Mammary epithelial cell (primary cell): ENCODE measurements at regions of chr3 and their contacts with region 1.

Region 1: DNA sequence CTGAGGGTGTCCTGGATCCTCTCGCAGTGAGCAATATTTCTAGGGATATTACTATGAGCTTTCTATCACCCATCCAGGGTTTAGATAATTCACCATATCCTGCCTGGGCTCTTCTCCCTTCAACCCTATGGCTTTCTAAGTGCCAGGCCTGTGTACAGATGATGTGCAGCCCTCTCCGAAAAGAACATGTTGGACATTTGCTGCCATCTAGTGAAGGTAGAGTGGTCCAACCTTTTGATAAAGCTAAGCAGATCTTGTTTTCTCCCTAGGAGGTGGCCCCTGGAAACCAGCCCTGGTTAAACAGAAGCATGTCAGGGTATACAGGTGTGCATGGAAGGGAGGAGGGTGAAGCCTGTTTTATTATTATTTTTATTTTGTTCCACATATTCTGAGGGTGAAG is 27.9 kb upstream of the SCN10A start:
- DNase-seq: peak; percentile 45
- H3K4me3 ChIP-seq: no peak overlapping the region
- H3K27ac ChIP-seq: no peak overlapping the region
- H3K4me1 ChIP-seq: no peaks in the 10 kb centered on the region
- H3K27me3 ChIP-seq: no peaks in the 10 kb centered on the region
- CTCF ChIP-seq: peak; percentile 15 to 60

Region 2: DNA sequence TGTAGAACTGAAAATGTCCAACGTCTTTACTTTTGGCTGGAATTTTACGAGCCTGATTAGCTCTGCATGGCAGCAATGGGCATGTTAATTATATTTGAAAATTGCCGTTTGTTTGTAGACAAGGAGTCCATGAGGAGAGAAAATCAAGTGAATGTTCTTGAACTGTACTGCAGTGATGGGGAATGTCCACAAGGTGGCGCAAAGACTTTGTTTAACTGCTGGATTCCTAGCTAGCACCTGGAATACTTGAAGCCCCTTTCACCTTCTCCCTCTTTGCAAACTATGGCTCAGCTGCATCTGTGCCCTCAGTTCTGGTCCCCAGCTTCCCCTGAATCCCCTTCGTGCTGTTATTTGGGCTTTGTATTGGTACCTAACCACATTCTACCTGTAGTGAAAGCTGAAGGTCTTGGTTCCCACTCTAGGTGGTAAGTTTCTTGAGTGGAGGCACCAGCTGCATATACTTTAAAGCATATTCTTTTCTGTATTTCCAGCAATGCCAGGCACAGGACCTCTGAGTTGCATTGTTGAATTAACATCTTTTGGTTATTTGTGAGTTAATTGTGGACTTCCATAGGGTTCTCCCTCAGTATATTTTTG is 322.4 kb before region 1 on chr3:
- CTCF ChIA-PET with region 1: no interaction called
- dilution Hi-C with region 1: no loop called
- in situ Hi-C with region 1: loop called in 1 of 2 experiments (anchors 25 kb)
- intact Hi-C with region 1: loop called (anchors 5 kb)
- DNase-seq: peak; percentile 54
- H3K4me3 ChIP-seq: no peak overlapping the region
- H3K27ac ChIP-seq: no peak overlapping the region
- H3K4me1 ChIP-seq: no peaks in the 10 kb centered on the region
- H3K27me3 ChIP-seq: no peaks in the 10 kb centered on the region
- CTCF ChIP-seq: peak; percentile 81 to 90

Region 3: DNA sequence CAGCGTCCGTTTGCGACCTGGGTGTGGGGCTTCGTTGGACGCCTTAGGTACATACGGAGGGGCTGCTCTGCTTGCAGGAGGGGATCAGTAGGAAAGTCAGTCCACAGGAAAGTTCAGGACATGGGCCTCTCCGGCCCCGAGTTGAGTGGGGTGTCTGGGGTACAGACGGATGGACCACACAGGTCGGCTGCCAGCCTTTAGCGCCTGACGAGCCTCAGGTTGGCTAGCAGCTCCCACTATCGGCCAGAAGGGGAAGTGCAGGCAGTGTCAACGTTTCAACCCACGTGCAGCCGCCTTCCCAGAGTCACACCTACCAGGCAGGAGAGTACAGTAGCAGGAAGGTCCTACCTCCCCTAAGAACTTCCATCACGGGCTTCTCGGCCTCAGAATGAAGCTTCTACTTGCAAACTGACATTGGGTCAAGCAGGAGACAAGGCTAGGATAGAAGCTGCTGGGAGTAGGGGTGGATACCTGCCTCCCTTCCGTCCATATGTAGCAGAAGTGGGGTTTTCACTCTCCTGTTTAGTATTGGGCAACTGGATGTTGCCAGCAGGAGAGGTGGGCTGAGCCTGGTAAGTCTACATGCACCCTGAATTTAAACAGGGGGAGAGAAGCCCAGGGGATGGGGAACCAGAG is 192.6 kb before region 1 on chr3:
- CTCF ChIA-PET with region 1: no interaction called
- dilution Hi-C with region 1: no loop called
- in situ Hi-C with region 1: no loop called
- intact Hi-C with region 1: loop called (anchors 2 kb)
- DNase-seq: peak; percentile 45
- H3K4me3 ChIP-seq: no peak overlapping the region
- H3K27ac ChIP-seq: no peak overlapping the region
- H3K4me1 ChIP-seq: peaks cover 6% of the 10 kb centered on the region
- H3K27me3 ChIP-seq: peaks cover 9% of the 10 kb centered on the region
- CTCF ChIP-seq: peak; percentile 98 to 99

Region 4: GRCh38 chr3:38805765-38806386 is 38.0 kb before region 1 on chr3:
- CTCF ChIA-PET with region 1: no interaction called
- dilution Hi-C with region 1: no loop called
- in situ Hi-C with region 1: no loop called
- intact Hi-C with region 1: no loop called
- DNase-seq: peak; percentile 67
- H3K4me3 ChIP-seq: no peak overlapping the region
- H3K27ac ChIP-seq: no peak overlapping the region
- H3K4me1 ChIP-seq: no peaks in the 10 kb centered on the region
- H3K27me3 ChIP-seq: peaks cover 3% of the 10 kb centered on the region
- CTCF ChIP-seq: no peak

Region 5: GRCh38 chr3:39000008-39000450 is 156.1 kb after region 1 on chr3:
- CTCF ChIA-PET with region 1: interaction called, 6 read pairs
- dilution Hi-C with region 1: no loop called
- in situ Hi-C with region 1: no loop called
- intact Hi-C with region 1: loop called (anchors 1 kb)
- DNase-seq: peak; percentile 92
- H3K4me3 ChIP-seq: no peak overlapping the region
- H3K27ac ChIP-seq: no peak overlapping the region
- H3K4me1 ChIP-seq: peaks cover 4% of the 10 kb centered on the region
- H3K27me3 ChIP-seq: no peaks in the 10 kb centered on the region
- CTCF ChIP-seq: peak; percentile 90 to 94

Region 6: GRCh38 chr3:39917065-39917773 is 1073.3 kb after region 1 on chr3:
- CTCF ChIA-PET with region 1: no interaction called
- dilution Hi-C with region 1: no loop called
- in situ Hi-C with region 1: no loop called
- intact Hi-C with region 1: no loop called
- DNase-seq: peak; percentile 68
- H3K4me3 ChIP-seq: no peak overlapping the region
- H3K27ac ChIP-seq: peak overlapping the region; percentile 35
- H3K4me1 ChIP-seq: peaks cover 4% of the 10 kb centered on the region
- H3K27me3 ChIP-seq: no peaks in the 10 kb centered on the region
- CTCF ChIP-seq: no peak